ENCODE measurements at regions of chr20 and their contacts with region 1.

Region 1: GRCh38 chr20:49620364-49621240 is 52.7 kb upstream of the PTGIS start:
- DNase-seq: peak; percentile 72
- H3K4me3 Mint-ChIP-seq: no peak overlapping the region
- H3K27ac Mint-ChIP-seq: peak overlapping the region; percentile 26
- H3K4me1 Mint-ChIP-seq: peaks cover 4% of the 10 kb centered on the region
- H3K27me3 Mint-ChIP-seq: peaks cover 9% of the 10 kb centered on the region

Region 2: GRCh38 chr20:49657118-49657901 is 36.7 kb after region 1 on chr20:
- intact Hi-C with region 1: loop called (anchors 5 kb)
- DNase-seq: no peak
- H3K4me3 Mint-ChIP-seq: no peak overlapping the region
- H3K27ac Mint-ChIP-seq: no peak overlapping the region
- H3K4me1 Mint-ChIP-seq: peaks cover 17% of the 10 kb centered on the region
- H3K27me3 Mint-ChIP-seq: no peaks in the 10 kb centered on the region

Region 3: GRCh38 chr20:49713753-49714712 is 93.4 kb after region 1 on chr20 and contains the start of gene B4GALT5:
- intact Hi-C with region 1: loop called (anchors 5 kb)
- DNase-seq: peak; percentile 92
- H3K4me3 Mint-ChIP-seq: peak within 1 kb of the TSS; percentile 94
- H3K27ac Mint-ChIP-seq: peak within 1 kb of the TSS; percentile 91
- H3K4me1 Mint-ChIP-seq: peaks cover 30% of the 10 kb centered on the region
- H3K27me3 Mint-ChIP-seq: no peaks in the 10 kb centered on the region
- total RNA-seq, gene B4GALT5: 39.0 and 39.1 TPM in 2 replicates